Esophagus muscularis mucosa (tissue), 4 donors: ENCODE measurements at regions of chr1 and their contacts with region 1.

Region 1: GRCh38 chr1:32612189-32612881 is 38.0 kb downstream of the ZBTB8OS start:
- DNase-seq: peak; percentile 93
- H3K4me3 ChIP-seq: peak overlapping the region; percentile 56 to 67 (median 57)
- H3K27ac ChIP-seq: peak overlapping the region in 2 of 4 donors; percentile 11 to 20
- H3K4me1 ChIP-seq: peaks cover 5 to 17% (median 16%) of the 10 kb centered on the region in 4 donors
- H3K27me3 ChIP-seq: no peaks in the 10 kb centered on the region
- CTCF ChIP-seq: peak; percentile 35 to 47 (median 44)
- EP300 ChIP-seq: no peak
- POLR2A ChIP-seq: no peak

Region 2: GRCh38 chr1:31866450-31867032 is 745.8 kb before region 1 on chr1:
- intact Hi-C with region 1: no loop called
- DNase-seq: no peak
- H3K4me3 ChIP-seq: no peak overlapping the region
- H3K27ac ChIP-seq: no peak overlapping the region
- H3K4me1 ChIP-seq: no peaks in the 10 kb centered on the region
- H3K27me3 ChIP-seq: no peaks in the 10 kb centered on the region
- CTCF ChIP-seq: no peak
- EP300 ChIP-seq: no peak
- POLR2A ChIP-seq: no peak

Region 3: DNA sequence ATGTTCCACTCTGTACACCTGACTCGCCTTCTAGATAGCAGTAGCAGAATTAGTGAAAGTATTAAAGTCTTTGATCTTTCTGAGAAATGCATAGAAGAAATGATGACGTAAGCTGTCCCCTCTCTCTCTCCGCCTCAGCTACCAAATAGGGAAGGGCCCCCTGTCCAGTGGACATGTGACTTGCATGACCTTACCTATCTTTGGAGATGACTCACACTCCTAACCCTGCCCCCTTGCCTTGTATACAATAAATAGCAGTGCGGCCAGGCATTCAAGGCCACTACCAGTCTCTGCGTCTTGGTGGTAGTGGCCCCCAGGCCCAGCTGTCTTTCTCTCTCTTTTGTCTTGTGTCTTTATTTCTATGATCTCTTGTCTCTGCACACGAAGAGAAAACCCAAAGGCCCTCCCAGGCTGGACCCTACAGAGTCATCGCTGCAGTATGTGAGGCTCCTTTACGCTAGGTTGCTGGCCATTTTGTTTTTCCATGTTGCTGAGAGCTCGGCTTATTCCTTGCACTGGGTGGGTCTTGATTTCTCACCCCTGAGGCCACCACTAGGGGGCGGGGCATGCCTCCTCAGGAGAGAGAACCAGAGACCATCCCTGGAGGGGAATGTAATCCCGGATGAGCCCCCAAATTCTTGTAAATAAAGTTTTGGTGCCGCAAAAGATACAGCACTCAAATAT is 163.4 kb before region 1 on chr1:
- intact Hi-C with region 1: loop called (anchors 10 kb)
- DNase-seq: no peak
- H3K4me3 ChIP-seq: no peak overlapping the region
- H3K27ac ChIP-seq: no peak overlapping the region
- H3K4me1 ChIP-seq: peaks cover 3 to 12% (median 8%) of the 10 kb centered on the region in 4 donors
- H3K27me3 ChIP-seq: no peaks in the 10 kb centered on the region
- CTCF ChIP-seq: peak in 1 of 3 experiments; percentile 30
- EP300 ChIP-seq: no peak
- POLR2A ChIP-seq: no peak

Region 4: DNA sequence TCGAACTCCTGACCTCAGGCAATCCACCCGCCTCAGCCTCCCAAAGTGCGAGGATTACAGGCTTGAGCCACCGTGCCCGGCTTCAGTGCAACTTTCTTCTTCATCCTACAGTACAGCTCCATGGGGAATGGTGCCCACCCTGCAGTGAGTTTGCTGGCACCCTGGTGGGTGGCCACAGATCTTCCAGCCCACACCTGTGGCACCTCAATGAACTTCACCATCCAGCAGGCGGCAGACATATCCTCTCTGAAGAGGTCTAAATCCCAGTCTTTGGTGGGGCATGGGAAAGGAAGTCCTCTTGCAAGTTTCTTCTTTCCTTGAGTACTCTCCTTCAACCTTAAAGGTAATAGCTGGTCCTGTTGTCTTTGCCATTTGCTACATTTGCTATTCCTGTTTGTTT is 91.2 kb before region 1 on chr1:
- intact Hi-C with region 1: loop called (anchors 10 kb)
- DNase-seq: no peak
- H3K4me3 ChIP-seq: no peak overlapping the region
- H3K27ac ChIP-seq: no peak overlapping the region
- H3K4me1 ChIP-seq: peaks cover 0 to 13% (median 9%) of the 10 kb centered on the region in 4 donors
- H3K27me3 ChIP-seq: no peaks in the 10 kb centered on the region
- CTCF ChIP-seq: no peak
- EP300 ChIP-seq: no peak
- POLR2A ChIP-seq: no peak

Region 5: DNA sequence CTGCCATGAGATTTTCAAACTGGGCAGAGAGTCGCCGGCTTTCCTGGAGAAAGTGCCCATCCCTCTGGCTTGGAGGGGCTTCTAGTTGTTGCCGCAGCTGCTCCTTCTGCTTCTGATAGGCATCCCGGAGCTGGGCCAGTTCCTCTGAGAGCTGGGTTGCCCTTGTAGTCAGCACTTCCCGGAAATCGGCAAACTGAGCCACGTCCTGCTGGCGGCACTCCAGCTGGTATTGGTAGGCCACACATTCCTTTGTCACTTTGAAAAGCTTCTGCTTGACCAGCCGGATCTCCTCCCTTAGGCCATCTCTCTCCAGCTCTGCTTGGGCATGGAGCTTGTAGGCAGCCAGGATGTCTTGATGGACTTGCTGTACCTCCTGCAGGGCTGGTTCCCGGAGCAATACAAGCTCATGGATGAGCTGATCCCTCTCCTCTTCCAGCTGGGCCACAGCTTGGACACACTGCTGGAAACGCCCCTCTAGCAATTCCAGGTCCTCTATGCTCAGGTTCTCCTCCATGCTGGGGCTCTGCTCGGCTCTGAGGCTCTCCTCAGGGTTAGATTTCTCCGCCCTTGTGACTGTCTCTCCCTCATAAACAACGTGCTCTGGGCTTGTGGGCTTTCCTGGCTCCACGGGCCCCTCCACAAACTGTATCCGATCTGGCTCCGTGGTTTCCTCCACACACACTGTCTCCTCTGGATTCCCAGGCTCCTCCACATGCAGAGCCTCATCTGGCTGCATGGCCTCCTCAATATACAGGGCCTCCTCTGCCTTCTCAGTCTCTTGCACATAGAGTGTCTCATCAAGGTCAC is 83.0 kb after region 1 on chr1:
- intact Hi-C with region 1: no loop called
- DNase-seq: no peak
- H3K4me3 ChIP-seq: peak overlapping the region in 2 of 4 donors; percentile 16 to 21
- H3K27ac ChIP-seq: peak overlapping the region; percentile 81 to 98 (median 96)
- H3K4me1 ChIP-seq: peaks cover 26 to 98% (median 87%) of the 10 kb centered on the region in 4 donors
- H3K27me3 ChIP-seq: no peaks in the 10 kb centered on the region
- CTCF ChIP-seq: no peak
- EP300 ChIP-seq: no peak
- POLR2A ChIP-seq: no peak